Activated CD8-positive, alpha-beta T cell treated with anti-CD3 and anti-CD28 coated beads for 36 hours (primary cell): ENCODE measurements at regions of chr4 and their contacts with region 1.

Region 1: GRCh38 chr4:88514557-88515511 is 8.7 kb downstream of the PYURF start:
- DNase-seq: no peak
- ATAC-seq: no peak
- H3K4me3 Mint-ChIP-seq: no peak overlapping the region
- H3K27ac Mint-ChIP-seq: no peak overlapping the region
- H3K4me1 Mint-ChIP-seq: no peaks in the 10 kb centered on the region
- H3K27me3 Mint-ChIP-seq: no peaks in the 10 kb centered on the region
- CTCF ChIP-seq: no peak

Region 2: DNA sequence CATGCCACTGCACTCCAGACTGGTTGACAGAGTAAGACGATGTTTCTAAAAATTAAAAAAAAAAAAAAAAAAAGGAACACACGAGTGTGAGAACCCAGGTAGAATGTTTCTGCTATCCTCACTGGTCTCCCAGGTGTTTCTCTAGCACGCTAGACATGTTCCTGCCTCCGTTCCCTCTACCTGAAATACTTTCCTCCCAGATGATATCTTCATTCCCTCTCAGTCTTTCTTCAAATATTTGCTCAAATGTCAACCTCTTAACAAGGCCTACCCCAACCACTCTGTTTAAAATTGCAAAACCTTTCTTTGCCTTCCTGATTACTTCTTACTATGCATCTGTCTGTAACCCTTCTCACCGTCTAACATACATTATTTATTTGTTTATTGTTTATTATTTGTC is 296.9 kb before region 1 on chr4:
- CTCF ChIA-PET with region 1: interaction called, 168 read pairs
- POLR2A ChIA-PET with region 1: no interaction called
- intact Hi-C with region 1: loop called (anchors 1 kb)
- DNase-seq: no peak
- ATAC-seq: no peak
- H3K4me3 Mint-ChIP-seq: no peak overlapping the region
- H3K27ac Mint-ChIP-seq: no peak overlapping the region
- H3K4me1 Mint-ChIP-seq: peaks cover 2% of the 10 kb centered on the region
- H3K27me3 Mint-ChIP-seq: peaks cover 3% of the 10 kb centered on the region
- CTCF ChIP-seq: no peak

Region 3: DNA sequence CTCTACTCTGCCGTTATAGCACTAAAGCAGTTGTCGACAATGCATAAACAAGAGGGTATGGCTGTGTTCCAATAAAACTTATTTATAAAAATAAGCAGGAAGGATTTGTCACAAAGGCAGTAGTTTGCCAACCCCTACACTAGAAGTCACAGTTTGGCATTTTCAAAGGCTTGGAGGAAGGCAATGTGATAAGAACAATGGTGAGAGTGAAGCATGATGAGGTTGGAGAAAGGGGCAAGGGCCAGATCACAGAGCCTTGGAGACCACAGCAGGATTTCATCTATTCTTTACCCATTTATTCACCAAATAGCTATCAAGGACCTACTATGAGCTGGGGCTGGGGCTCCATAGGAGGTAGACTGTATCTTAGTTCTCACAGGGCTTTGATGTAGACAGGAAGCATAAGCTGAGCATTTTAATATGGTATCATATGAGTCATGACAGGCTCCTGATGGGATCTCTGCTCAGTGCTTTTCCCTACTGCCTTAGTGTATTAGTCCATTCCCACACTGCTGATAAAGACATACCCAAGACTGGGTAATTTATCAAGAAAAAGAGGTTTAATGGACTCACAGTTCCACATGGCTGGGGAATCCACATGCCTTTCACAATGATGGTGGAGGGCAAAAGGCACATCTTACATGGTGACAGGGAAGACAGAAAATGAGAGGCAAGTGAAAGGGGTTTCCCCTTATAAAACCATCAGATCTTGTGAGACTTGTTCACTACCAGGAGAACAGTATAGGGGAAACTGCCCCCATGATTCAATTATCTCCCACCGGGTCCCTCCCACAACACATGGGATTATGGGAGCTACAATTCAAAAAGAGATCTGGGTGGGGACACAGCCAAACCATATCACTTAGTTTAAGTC is 289.4 kb before region 1 on chr4:
- CTCF ChIA-PET with region 1: interaction called, 168 read pairs
- POLR2A ChIA-PET with region 1: no interaction called
- intact Hi-C with region 1: no loop called
- DNase-seq: no peak
- ATAC-seq: peak; percentile 80
- H3K4me3 Mint-ChIP-seq: no peak overlapping the region
- H3K27ac Mint-ChIP-seq: peak overlapping the region; percentile 55
- H3K4me1 Mint-ChIP-seq: peaks cover 11% of the 10 kb centered on the region
- H3K27me3 Mint-ChIP-seq: no peaks in the 10 kb centered on the region
- CTCF ChIP-seq: no peak

Region 4: GRCh38 chr4:88366460-88366859 is 148.4 kb before region 1 on chr4:
- CTCF ChIA-PET with region 1: interaction called, 38 read pairs
- POLR2A ChIA-PET with region 1: no interaction called
- intact Hi-C with region 1: loop called (anchors 2 kb)
- DNase-seq: no peak
- ATAC-seq: peak; percentile 93
- H3K4me3 Mint-ChIP-seq: no peak overlapping the region
- H3K27ac Mint-ChIP-seq: no peak overlapping the region
- H3K4me1 Mint-ChIP-seq: peaks cover 5% of the 10 kb centered on the region
- H3K27me3 Mint-ChIP-seq: no peaks in the 10 kb centered on the region
- CTCF ChIP-seq: no peak

Region 5: GRCh38 chr4:88378691-88379559 is 135.9 kb before region 1 on chr4 and contains the start of gene HERC6:
- CTCF ChIA-PET with region 1: interaction called, 11 read pairs
- POLR2A ChIA-PET with region 1: no interaction called
- intact Hi-C with region 1: loop called (anchors 5 kb)
- DNase-seq: peak; percentile 89
- ATAC-seq: peak; percentile 58
- H3K4me3 Mint-ChIP-seq: peak within 1 kb of the TSS; percentile 78
- H3K27ac Mint-ChIP-seq: peak within 1 kb of the TSS; percentile 72
- H3K4me1 Mint-ChIP-seq: peaks cover 34% of the 10 kb centered on the region
- H3K27me3 Mint-ChIP-seq: no peaks in the 10 kb centered on the region
- CTCF ChIP-seq: peak; percentile 68
- total RNA-seq, gene HERC6: 3.0 to 4.0 TPM

Region 6: GRCh38 chr4:88396681-88397080 is 118.2 kb before region 1 on chr4:
- CTCF ChIA-PET with region 1: interaction called, 11 read pairs
- POLR2A ChIA-PET with region 1: no interaction called
- intact Hi-C with region 1: no loop called
- DNase-seq: no peak
- ATAC-seq: no peak
- H3K4me3 Mint-ChIP-seq: no peak overlapping the region
- H3K27ac Mint-ChIP-seq: no peak overlapping the region
- H3K4me1 Mint-ChIP-seq: no peaks in the 10 kb centered on the region
- H3K27me3 Mint-ChIP-seq: no peaks in the 10 kb centered on the region
- CTCF ChIP-seq: no peak

Region 7: GRCh38 chr4:88503344-88503743 is 11.5 kb before region 1 on chr4:
- CTCF ChIA-PET with region 1: interaction called, 38 read pairs
- POLR2A ChIA-PET with region 1: interaction called, 4 read pairs
- intact Hi-C with region 1: no loop called
- DNase-seq: no peak
- ATAC-seq: peak; percentile 27
- H3K4me3 Mint-ChIP-seq: no peak overlapping the region
- H3K27ac Mint-ChIP-seq: no peak overlapping the region
- H3K4me1 Mint-ChIP-seq: peaks cover 4% of the 10 kb centered on the region
- H3K27me3 Mint-ChIP-seq: no peaks in the 10 kb centered on the region
- CTCF ChIP-seq: no peak

Region 8: DNA sequence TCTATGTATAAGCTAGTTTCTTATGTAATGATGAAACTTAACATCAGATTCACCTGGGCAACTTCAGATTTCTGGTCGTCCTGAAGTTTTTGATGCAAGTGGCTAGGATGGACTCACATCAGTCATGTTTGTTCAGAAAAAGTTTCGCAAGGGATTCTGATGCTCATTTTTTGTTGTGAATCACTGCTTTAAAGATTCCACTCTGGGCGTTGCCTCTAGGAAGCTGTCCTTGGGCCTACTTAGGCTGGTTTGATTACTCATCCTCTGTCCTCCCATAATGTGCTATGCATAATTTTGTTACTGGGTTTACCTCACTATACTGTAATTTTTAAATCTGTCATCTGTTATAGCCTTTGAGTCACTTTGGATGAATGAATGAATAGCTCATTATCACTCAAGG is 108.3 kb after region 1 on chr4:
- CTCF ChIA-PET with region 1: no interaction called
- POLR2A ChIA-PET with region 1: no interaction called
- intact Hi-C with region 1: no loop called
- DNase-seq: no peak
- ATAC-seq: no peak
- H3K4me3 Mint-ChIP-seq: no peak overlapping the region
- H3K27ac Mint-ChIP-seq: no peak overlapping the region
- H3K4me1 Mint-ChIP-seq: peaks cover 21% of the 10 kb centered on the region
- H3K27me3 Mint-ChIP-seq: no peaks in the 10 kb centered on the region
- CTCF ChIP-seq: no peak

Region 9: DNA sequence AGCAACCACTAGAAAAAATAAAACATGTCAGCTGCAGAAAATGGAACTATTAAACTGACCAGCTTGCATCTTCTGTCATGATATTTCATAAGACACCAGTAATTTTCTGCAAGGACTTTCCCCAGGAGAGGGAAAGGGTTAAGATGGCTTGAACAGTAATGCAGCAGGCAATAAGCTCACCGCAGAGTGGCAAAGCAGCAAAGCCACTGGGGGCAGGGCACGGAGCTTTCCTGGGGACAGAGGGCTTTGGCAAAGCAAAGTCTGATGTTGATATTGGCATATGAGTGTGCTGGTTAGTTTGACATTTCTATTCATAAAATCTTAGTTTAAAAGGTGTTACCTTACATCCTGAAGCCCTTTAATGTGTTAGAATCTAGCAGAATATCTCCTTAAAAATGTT is 237.9 kb after region 1 on chr4:
- CTCF ChIA-PET with region 1: no interaction called
- POLR2A ChIA-PET with region 1: no interaction called
- intact Hi-C with region 1: no loop called
- DNase-seq: no peak
- ATAC-seq: no peak
- H3K4me3 Mint-ChIP-seq: no peak overlapping the region
- H3K27ac Mint-ChIP-seq: no peak overlapping the region
- H3K4me1 Mint-ChIP-seq: no peaks in the 10 kb centered on the region
- H3K27me3 Mint-ChIP-seq: peaks cover 1% of the 10 kb centered on the region
- CTCF ChIP-seq: no peak

Region 10: GRCh38 chr4:88900432-88900831 is 385.6 kb after region 1 on chr4:
- CTCF ChIA-PET with region 1: no interaction called
- POLR2A ChIA-PET with region 1: no interaction called
- intact Hi-C with region 1: no loop called
- DNase-seq: no peak
- ATAC-seq: no peak
- H3K4me3 Mint-ChIP-seq: no peak overlapping the region
- H3K27ac Mint-ChIP-seq: no peak overlapping the region
- H3K4me1 Mint-ChIP-seq: no peaks in the 10 kb centered on the region
- H3K27me3 Mint-ChIP-seq: peaks cover 4% of the 10 kb centered on the region
- CTCF ChIP-seq: no peak